Mammary epithelial cell (primary cell): ENCODE measurements at regions of chr3 and their contacts with region 1.

Region 1: DNA sequence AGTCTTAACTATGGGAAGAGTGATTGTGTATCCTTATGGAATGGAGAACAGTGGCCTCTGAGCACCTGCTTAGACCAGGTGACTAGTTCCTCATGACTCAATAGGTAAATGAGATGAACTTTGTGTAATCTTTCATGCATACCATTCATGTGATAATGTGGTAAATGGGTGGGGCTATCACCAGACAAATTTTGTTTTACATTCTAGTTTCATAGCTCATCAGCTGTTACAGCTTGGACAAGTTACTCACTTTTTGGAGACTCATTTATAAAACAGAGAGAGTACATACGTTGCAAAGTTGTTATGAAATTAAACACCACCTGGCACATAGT is 103.7 kb upstream of the TGFBR2 start:
- DNase-seq: peak; percentile 95
- H3K4me3 ChIP-seq: no peak overlapping the region
- H3K27ac ChIP-seq: peak overlapping the region; percentile 86
- H3K4me1 ChIP-seq: peaks cover 31% of the 10 kb centered on the region
- H3K27me3 ChIP-seq: no peaks in the 10 kb centered on the region
- CTCF ChIP-seq: no peak

Region 2: GRCh38 chr3:30167541-30168011 is 335.1 kb before region 1 on chr3:
- CTCF ChIA-PET with region 1: no interaction called
- dilution Hi-C with region 1: no loop called
- in situ Hi-C with region 1: no loop called
- intact Hi-C with region 1: no loop called
- DNase-seq: peak; percentile 58
- H3K4me3 ChIP-seq: no peak overlapping the region
- H3K27ac ChIP-seq: no peak overlapping the region
- H3K4me1 ChIP-seq: peaks cover 9% of the 10 kb centered on the region
- H3K27me3 ChIP-seq: no peaks in the 10 kb centered on the region
- CTCF ChIP-seq: no peak

Region 3: DNA sequence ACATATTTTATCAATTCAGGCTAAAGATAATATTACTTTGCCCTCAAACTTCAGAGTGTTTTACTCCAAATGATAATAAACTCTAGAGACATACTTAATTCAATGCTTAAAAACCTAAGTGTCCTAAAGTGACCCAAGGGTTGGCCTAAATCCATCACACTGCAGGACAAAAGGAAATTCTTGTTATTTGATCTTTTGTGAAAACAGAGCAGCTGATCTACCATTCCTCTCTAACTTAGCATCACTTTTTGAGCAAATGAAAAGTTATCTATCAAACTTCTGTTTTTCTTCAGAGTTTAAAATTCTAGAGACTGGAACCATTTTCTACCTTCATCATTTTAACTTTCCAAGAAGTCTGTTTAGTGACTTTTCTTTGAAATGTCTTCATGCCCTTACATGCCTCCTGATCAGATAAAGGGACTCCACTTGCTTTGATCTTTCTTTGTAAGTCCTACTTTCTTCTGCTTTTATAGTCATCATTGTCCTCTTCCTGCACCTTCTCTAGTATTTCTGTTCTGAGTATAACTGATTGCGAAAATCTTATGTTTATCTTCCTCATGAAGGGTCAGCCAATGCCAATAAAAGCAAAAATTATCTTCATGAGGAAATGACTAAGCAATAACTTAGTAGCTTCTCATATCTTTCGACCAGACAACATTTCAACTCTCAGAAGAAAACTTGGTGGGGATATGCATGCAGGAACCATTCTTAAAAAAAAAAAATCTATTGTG is 275.0 kb before region 1 on chr3:
- CTCF ChIA-PET with region 1: no interaction called
- dilution Hi-C with region 1: no loop called
- in situ Hi-C with region 1: no loop called
- intact Hi-C with region 1: loop called (anchors 10 kb)
- DNase-seq: peak; percentile 77
- H3K4me3 ChIP-seq: no peak overlapping the region
- H3K27ac ChIP-seq: no peak overlapping the region
- H3K4me1 ChIP-seq: peaks cover 12% of the 10 kb centered on the region
- H3K27me3 ChIP-seq: no peaks in the 10 kb centered on the region
- CTCF ChIP-seq: no peak

Region 4: GRCh38 chr3:30342319-30343060 is 160.2 kb before region 1 on chr3:
- CTCF ChIA-PET with region 1: no interaction called
- dilution Hi-C with region 1: no loop called
- in situ Hi-C with region 1: no loop called
- intact Hi-C with region 1: loop called (anchors 1 kb)
- DNase-seq: peak; percentile 97
- H3K4me3 ChIP-seq: no peak overlapping the region
- H3K27ac ChIP-seq: peak overlapping the region; percentile 96
- H3K4me1 ChIP-seq: peaks cover 56% of the 10 kb centered on the region
- H3K27me3 ChIP-seq: no peaks in the 10 kb centered on the region
- CTCF ChIP-seq: no peak

Region 5: DNA sequence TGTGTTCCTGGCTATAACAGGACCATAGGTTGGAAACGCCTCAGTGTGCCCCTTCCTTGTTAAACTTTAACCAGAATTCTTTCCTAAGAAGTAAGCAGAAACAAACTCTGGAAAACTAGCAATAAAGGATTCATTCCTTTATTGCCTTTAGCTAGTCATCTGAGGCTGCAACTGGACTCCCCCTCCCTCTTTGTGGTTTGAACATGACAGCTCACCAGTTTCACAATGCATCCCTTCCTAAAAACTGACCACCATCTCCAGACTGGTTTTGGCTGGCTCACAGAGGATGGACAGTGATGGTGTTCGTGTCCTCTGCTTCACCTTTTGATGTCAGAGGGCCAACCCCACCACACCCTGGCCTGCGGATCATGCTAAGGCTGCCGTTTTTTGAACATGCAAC is 75.8 kb after region 1 on chr3:
- CTCF ChIA-PET with region 1: no interaction called
- dilution Hi-C with region 1: no loop called
- in situ Hi-C with region 1: no loop called
- intact Hi-C with region 1: no loop called
- DNase-seq: peak; percentile 94
- H3K4me3 ChIP-seq: no peak overlapping the region
- H3K27ac ChIP-seq: peak overlapping the region; percentile 71
- H3K4me1 ChIP-seq: peaks cover 40% of the 10 kb centered on the region
- H3K27me3 ChIP-seq: no peaks in the 10 kb centered on the region
- CTCF ChIP-seq: no peak